HEK293 (cell line): ENCODE measurements at regions of chr20 and their contacts with region 1.

Region 1: GRCh38 chr20:20518263-20518662 is 150.4 kb downstream of the INSM1 start:
- H3K4me3 ChIP-seq: no peak overlapping the region
- H3K27ac ChIP-seq: no peak overlapping the region
- H3K4me1 ChIP-seq: no peaks in the 10 kb centered on the region
- CTCF ChIP-seq: no peak

Region 2: DNA sequence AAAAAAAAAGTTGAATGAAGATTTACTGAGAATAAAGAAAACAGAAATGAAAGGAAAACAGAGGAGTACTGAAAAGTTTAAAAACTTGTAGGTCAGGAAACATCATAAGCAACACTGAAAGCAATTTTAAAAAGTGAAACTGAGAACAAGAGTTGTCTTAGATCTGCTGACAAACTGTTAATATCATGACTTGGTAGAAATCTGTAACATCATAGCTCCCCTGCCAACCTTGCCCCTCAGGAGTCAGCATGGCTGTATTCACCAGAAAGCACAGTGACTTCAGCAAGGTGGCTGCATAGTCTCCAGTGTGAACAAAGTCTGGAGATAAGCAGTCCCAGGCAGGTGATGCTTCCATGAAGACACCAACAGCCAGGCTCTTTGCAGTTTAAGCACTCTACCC is 495.8 kb before region 1 on chr20:
- CTCF ChIA-PET with region 1: interaction called, 10 read pairs
- POLR2A ChIA-PET with region 1: no interaction called
- H3K4me3 ChIP-seq: no peak overlapping the region
- H3K27ac ChIP-seq: no peak overlapping the region
- H3K4me1 ChIP-seq: peaks cover 4% of the 10 kb centered on the region; the same call in 1 of the 2 replicates
- CTCF ChIP-seq: no peak

Region 3: GRCh38 chr20:20536240-20536933 is 18.1 kb after region 1 on chr20:
- CTCF ChIA-PET with region 1: no interaction called
- POLR2A ChIA-PET with region 1: no interaction called
- H3K4me3 ChIP-seq: no peak overlapping the region
- H3K27ac ChIP-seq: no peak overlapping the region
- H3K4me1 ChIP-seq: no peaks in the 10 kb centered on the region
- CTCF ChIP-seq: no peak